ENCODE measurements at regions of chr9 and their contacts with region 1.

Region 1: GRCh38 chr9:91359734-91360470 is 1.8 kb downstream of the AUH start:
- DNase-seq: no peak
- H3K4me3 Mint-ChIP-seq: peak overlapping the region; percentile 91
- H3K27ac Mint-ChIP-seq: peak overlapping the region; percentile 54
- H3K4me1 Mint-ChIP-seq: peaks cover 47% of the 10 kb centered on the region
- H3K27me3 Mint-ChIP-seq: no peaks in the 10 kb centered on the region

Region 2: DNA sequence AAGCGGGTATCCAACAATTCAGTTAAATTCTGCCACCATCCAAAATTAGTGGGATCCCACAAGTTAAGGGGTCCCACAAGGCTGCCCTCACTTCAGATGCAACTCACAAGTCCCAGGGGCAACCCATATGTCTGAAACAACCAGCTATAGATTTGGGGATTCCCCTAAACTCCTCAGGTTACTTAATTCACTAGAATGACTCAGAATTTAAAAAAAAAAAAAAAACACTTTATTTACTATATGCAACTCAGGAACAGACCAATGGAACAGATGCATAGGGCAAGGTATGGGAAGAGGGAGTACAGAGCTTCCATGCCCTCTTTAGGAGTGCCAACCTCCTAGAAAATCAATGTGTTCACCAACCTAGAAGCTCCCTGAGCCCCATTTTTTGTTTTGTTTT is 13.2 kb before region 1 on chr9:
- CTCF ChIA-PET with region 1: interaction called, 7 read pairs
- intact Hi-C with region 1: loop called (anchors 1 kb)
- DNase-seq: no peak
- H3K4me3 Mint-ChIP-seq: no peak overlapping the region
- H3K27ac Mint-ChIP-seq: no peak overlapping the region
- H3K4me1 Mint-ChIP-seq: peaks cover 19% of the 10 kb centered on the region
- H3K27me3 Mint-ChIP-seq: no peaks in the 10 kb centered on the region

Region 3: DNA sequence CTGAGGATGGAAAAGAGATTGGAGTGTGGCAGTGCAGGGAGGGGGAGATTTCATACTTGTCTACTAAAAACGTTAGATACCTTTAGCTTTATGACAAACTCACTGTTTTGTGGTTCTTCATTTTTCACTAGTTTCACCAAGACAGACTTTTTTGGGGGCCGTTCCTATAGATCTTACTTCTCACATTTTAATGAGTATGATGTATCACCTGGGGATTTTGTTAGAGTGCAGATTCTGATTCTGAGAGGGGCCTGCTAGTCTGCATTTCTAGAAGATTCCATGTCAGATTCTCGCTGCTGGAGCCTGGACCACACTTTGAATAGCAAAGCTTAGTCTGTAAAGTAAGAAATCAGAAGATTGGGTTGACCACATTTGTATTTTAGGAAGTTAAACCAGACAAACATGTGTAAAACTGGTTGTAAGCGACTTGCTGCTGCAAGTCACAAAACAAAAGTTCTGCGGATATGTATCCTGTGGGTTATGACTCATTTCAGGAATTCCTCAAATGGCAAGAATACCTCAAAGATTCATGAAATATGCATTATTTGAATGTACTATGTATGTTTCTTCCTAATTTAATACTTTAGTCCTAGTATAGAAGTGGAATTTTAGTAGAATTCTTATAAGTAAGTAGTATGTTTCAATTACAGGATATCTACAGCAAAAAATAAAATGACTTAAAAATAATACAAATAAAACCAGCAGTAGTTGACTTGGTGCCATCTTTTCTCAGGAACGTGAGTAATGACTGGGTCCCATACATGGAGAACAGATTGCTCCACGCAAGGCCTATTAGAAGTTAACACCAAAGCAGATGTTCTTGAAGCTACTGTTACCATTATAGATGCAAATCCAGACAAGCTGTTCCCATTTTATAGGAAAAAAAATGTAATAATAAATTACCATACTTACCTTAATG is 35.9 kb after region 1 on chr9:
- CTCF ChIA-PET with region 1: interaction called, 3 read pairs
- intact Hi-C with region 1: loop called (anchors 1 kb)
- DNase-seq: peak; percentile 41
- H3K4me3 Mint-ChIP-seq: no peak overlapping the region
- H3K27ac Mint-ChIP-seq: peak overlapping the region; percentile 74
- H3K4me1 Mint-ChIP-seq: peaks cover 11% of the 10 kb centered on the region
- H3K27me3 Mint-ChIP-seq: peaks cover 12% of the 10 kb centered on the region

Region 4: GRCh38 chr9:91415290-91415689 is 55.4 kb after region 1 on chr9:
- CTCF ChIA-PET with region 1: no interaction called
- intact Hi-C with region 1: loop called (anchors 2 kb)
- DNase-seq: peak; percentile 56
- H3K4me3 Mint-ChIP-seq: no peak overlapping the region
- H3K27ac Mint-ChIP-seq: peak overlapping the region; percentile 80
- H3K4me1 Mint-ChIP-seq: peaks cover 69% of the 10 kb centered on the region
- H3K27me3 Mint-ChIP-seq: peaks cover 2% of the 10 kb centered on the region

Region 5: DNA sequence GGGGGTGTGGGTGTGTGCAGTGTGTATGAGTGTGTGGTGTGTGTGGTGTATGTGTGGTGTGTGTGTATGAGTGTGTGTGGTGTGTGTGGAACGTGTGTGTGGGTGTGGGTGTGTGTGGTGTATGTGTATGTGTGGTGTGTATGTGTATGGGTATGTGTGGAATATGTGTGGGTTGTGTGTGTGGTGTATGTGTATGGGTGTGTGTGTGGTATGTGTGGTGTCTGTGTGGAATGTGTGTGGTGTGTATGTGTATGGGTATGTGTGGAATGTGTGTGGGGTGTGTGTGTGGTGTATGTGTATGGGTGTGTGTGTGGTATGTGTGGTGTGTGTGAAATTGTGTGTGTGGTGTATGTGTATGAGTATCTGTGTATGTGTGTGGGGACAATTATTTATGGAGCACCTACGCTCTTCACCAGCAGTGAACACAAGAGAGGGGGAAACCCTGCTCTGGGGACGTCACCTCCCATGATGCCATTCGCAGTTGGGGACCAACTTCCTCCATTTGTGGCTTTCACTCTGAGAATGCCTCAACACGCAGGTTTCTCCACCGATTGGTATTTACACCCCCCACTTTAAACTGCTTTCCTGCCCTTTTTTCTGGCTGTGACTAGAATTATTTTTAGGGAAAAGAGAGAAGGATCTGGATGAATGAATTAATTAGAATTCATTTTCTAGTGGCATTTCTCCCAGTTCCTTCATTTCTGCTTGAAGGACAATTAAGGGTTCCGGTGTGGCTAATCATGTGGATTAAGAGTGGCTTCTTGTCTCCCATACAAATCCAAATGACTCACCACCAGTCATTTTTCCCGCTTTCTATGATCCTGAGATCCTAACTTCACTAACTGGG is 352.1 kb after region 1 on chr9:
- CTCF ChIA-PET with region 1: no interaction called
- intact Hi-C with region 1: loop called (anchors 5 kb)
- DNase-seq: peak; percentile 92
- H3K4me3 Mint-ChIP-seq: no peak overlapping the region
- H3K27ac Mint-ChIP-seq: no peak overlapping the region
- H3K4me1 Mint-ChIP-seq: no peaks in the 10 kb centered on the region
- H3K27me3 Mint-ChIP-seq: peaks cover 28% of the 10 kb centered on the region

Measured in activated naive CD4-positive, alpha-beta T cell treated with anti-CD3 and anti-CD28 coated beads for 36 hours (primary cell).